B cell (primary cell): ENCODE measurements at regions of chr1 and their contacts with region 1.

Region 1: GRCh38 chr1:235954306-235955283 is 87.9 kb upstream of the LYST start:
- DNase-seq: peak; percentile 95
- ATAC-seq: peak; percentile 88
- H3K4me3 ChIP-seq: peak overlapping the region in 3 of 5 experiments; percentile 18 to 37 (median 32)
- H3K4me3 Mint-ChIP-seq: peak overlapping the region; percentile 72
- H3K27ac ChIP-seq: peak overlapping the region; percentile 70 to 78
- H3K27ac Mint-ChIP-seq: peak overlapping the region; percentile 82
- H3K4me1 ChIP-seq: peaks cover 57 to 61% of the 10 kb centered on the region in 2 donors
- H3K4me1 Mint-ChIP-seq: peaks cover 71% of the 10 kb centered on the region
- H3K27me3 ChIP-seq: no peaks in the 10 kb centered on the region
- H3K27me3 Mint-ChIP-seq: no peaks in the 10 kb centered on the region
- CTCF ChIP-seq: no peak

Region 2: GRCh38 chr1:235923466-235924021 is 31.1 kb before region 1 on chr1:
- CTCF ChIA-PET with region 1: interaction called, 3 read pairs
- POLR2A ChIA-PET with region 1: interaction called, 3 read pairs
- intact Hi-C with region 1: loop called (anchors 1 kb)
- DNase-seq: peak; percentile 63
- ATAC-seq: peak; percentile 78
- H3K4me3 ChIP-seq: peak overlapping the region in 2 of 5 experiments; percentile 2 to 17
- H3K4me3 Mint-ChIP-seq: peak overlapping the region; percentile 69
- H3K27ac ChIP-seq: peak overlapping the region; percentile 45 to 61
- H3K27ac Mint-ChIP-seq: peak overlapping the region; percentile 51
- H3K4me1 ChIP-seq: peaks cover 30% of the 10 kb centered on the region in 2 donors
- H3K4me1 Mint-ChIP-seq: peaks cover 51% of the 10 kb centered on the region
- H3K27me3 ChIP-seq: no peaks in the 10 kb centered on the region
- H3K27me3 Mint-ChIP-seq: no peaks in the 10 kb centered on the region
- CTCF ChIP-seq: no peak

Region 3: GRCh38 chr1:235933017-235933765 is 21.4 kb before region 1 on chr1:
- CTCF ChIA-PET with region 1: interaction called, 24 read pairs
- POLR2A ChIA-PET with region 1: interaction called, 17 read pairs
- intact Hi-C with region 1: loop called (anchors 2 kb)
- DNase-seq: peak; percentile 33
- ATAC-seq: no peak
- H3K4me3 ChIP-seq: no peak overlapping the region
- H3K4me3 Mint-ChIP-seq: peak overlapping the region; percentile 1
- H3K27ac ChIP-seq: peak overlapping the region; percentile 26 to 75
- H3K27ac Mint-ChIP-seq: peak overlapping the region; percentile 85
- H3K4me1 ChIP-seq: peaks cover 93 to 95% of the 10 kb centered on the region in 2 donors
- H3K4me1 Mint-ChIP-seq: peaks cover 80% of the 10 kb centered on the region
- H3K27me3 ChIP-seq: no peaks in the 10 kb centered on the region
- H3K27me3 Mint-ChIP-seq: no peaks in the 10 kb centered on the region
- CTCF ChIP-seq: no peak

Region 4: DNA sequence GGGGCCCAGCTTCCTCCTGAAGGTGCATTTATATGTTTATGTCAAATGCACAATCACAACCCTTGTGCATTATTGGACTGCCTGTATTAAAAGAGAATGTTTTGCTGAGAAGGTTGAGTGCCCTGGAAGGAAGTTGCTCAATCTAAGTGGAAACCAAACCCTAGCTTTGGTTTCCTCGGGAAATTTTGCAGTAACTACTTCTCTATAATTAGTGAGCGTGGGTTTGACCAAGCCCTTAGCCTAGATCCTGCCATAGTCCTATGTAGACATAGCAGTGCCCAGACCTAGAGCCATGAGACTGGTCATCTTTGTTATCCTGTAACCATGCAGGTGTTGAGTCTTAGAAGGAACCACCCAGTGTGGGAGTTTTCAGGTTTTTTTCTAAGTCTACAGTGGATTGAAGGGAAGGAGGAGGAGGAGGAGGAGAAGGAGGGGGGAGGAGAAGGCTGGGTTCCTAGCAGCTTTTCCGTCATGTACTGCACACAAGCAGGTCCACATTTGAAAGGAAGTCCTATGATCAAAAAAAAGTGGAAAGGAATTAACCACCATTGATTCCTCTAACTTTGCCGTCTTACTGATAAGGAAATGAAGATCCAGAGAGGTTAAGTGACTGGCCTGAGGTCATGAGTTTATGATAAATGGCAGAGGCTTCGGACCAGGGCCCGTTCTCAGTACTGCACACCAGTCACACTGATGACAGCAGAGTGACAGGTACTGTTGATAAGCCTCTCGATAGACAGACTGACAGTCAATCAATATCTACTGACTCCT is 15.7 kb before region 1 on chr1:
- CTCF ChIA-PET with region 1: interaction called, 24 read pairs
- POLR2A ChIA-PET with region 1: interaction called, 16 read pairs
- intact Hi-C with region 1: loop called (anchors 2 kb)
- DNase-seq: peak; percentile 75
- ATAC-seq: peak; percentile 84
- H3K4me3 ChIP-seq: peak overlapping the region in 4 of 5 experiments; percentile 8 to 42 (median 17)
- H3K4me3 Mint-ChIP-seq: peak overlapping the region; percentile 72
- H3K27ac ChIP-seq: peak overlapping the region; percentile 79 to 89
- H3K27ac Mint-ChIP-seq: peak overlapping the region; percentile 87
- H3K4me1 ChIP-seq: peaks cover 85 to 89% of the 10 kb centered on the region in 2 donors
- H3K4me1 Mint-ChIP-seq: peaks cover 80% of the 10 kb centered on the region
- H3K27me3 ChIP-seq: no peaks in the 10 kb centered on the region
- H3K27me3 Mint-ChIP-seq: no peaks in the 10 kb centered on the region
- CTCF ChIP-seq: no peak

Region 5: DNA sequence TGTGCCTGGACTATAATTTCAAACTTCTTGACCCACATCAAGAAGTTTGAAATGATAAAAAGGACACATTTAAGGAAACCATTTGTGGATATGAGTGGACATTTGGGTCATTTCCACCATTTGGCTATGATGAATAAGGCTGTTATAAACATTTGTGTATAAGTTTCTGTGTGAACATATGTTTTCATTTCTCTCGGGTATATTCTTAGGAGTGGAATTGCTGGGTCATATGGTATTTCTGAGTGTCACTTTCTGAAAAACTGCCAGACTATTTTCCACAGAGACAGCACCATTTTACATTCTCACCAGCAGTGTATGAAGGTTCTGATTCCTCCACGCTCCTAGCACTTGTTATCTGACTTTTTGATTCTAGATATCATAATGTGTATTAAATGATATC is 238.6 kb after region 1 on chr1:
- CTCF ChIA-PET with region 1: no interaction called
- POLR2A ChIA-PET with region 1: no interaction called
- intact Hi-C with region 1: no loop called
- DNase-seq: no peak
- ATAC-seq: no peak
- H3K4me3 ChIP-seq: no peak overlapping the region
- H3K4me3 Mint-ChIP-seq: no peak overlapping the region
- H3K27ac ChIP-seq: no peak overlapping the region
- H3K27ac Mint-ChIP-seq: no peak overlapping the region
- H3K4me1 ChIP-seq: no peaks in the 10 kb centered on the region
- H3K4me1 Mint-ChIP-seq: peaks cover 1% of the 10 kb centered on the region
- H3K27me3 ChIP-seq: no peaks in the 10 kb centered on the region
- H3K27me3 Mint-ChIP-seq: no peaks in the 10 kb centered on the region
- CTCF ChIP-seq: no peak